H1 (cell line): ENCODE measurements at regions of chr6 and their contacts with region 1.

Region 1: GRCh38 chr6:20511852-20512251 is 22.4 kb upstream of the CDKAL1 start:
- DNase-seq: no peak
- H3K4me3 ChIP-seq: no peak overlapping the region
- H3K27ac ChIP-seq: no peak overlapping the region
- H3K4me1 ChIP-seq: no peaks in the 10 kb centered on the region
- H3K27me3 ChIP-seq: no peaks in the 10 kb centered on the region; a peak in 1 of 7 replicates
- CTCF ChIP-seq: no peak
- EP300 ChIP-seq: no peak
- POLR2A ChIP-seq: no peak
- RAD21 ChIP-seq: no peak

Region 2: DNA sequence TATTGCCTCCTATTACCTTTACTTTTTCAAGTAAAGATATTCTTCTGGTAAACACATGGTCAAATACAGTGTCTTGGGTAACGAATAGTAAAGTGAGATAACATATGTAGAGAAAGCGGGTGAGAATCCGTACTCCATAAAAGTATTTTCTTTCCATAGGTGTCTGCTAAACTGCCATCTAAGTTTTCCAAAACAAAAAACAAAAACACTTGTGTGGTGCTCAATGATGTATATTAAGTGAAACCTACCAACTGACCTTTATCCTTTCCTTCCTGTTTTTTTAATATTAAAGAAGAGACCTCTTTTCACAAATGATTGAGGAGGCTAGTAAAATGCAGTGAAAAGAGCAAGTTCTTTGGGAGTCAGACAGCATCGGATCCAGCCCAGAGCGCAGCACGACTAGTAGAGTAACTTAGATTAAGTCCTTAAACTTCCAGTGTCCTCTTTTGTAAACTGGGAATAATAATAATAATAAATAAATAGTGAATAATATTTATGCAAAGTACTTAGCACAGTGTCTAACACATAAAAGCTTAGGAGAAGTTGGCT is 22.0 kb after region 1 on chr6:
- CTCF ChIA-PET with region 1: interaction called, 21 read pairs
- POLR2A ChIA-PET with region 1: no interaction called
- DNase-seq: peak in 1 of 2 experiments; percentile 22
- H3K4me3 ChIP-seq: peak overlapping the region; percentile 75 to 96 (median 90); a peak in 7 of 8 replicates
- H3K27ac ChIP-seq: peak overlapping the region; percentile 84; the same call in 1 of the 2 replicates
- H3K4me1 ChIP-seq: peaks cover 0 to 3% (median 0%) of the 10 kb centered on the region in 4 experiments; a peak in 1 of 7 replicates
- H3K27me3 ChIP-seq: no peaks in the 10 kb centered on the region
- CTCF ChIP-seq: no peak
- EP300 ChIP-seq: no peak
- POLR2A ChIP-seq: no peak
- RAD21 ChIP-seq: no peak

Region 3: GRCh38 chr6:20548264-20548663 is 36.4 kb after region 1 on chr6:
- CTCF ChIA-PET with region 1: no interaction called
- POLR2A ChIA-PET with region 1: no interaction called
- DNase-seq: no peak
- H3K4me3 ChIP-seq: no peak overlapping the region
- H3K27ac ChIP-seq: no peak overlapping the region
- H3K4me1 ChIP-seq: no peaks in the 10 kb centered on the region
- H3K27me3 ChIP-seq: no peaks in the 10 kb centered on the region
- CTCF ChIP-seq: no peak
- EP300 ChIP-seq: no peak
- POLR2A ChIP-seq: no peak
- RAD21 ChIP-seq: no peak